Mammary epithelial cell (primary cell): ENCODE measurements at regions of chr14 and their contacts with region 1.

Region 1: DNA sequence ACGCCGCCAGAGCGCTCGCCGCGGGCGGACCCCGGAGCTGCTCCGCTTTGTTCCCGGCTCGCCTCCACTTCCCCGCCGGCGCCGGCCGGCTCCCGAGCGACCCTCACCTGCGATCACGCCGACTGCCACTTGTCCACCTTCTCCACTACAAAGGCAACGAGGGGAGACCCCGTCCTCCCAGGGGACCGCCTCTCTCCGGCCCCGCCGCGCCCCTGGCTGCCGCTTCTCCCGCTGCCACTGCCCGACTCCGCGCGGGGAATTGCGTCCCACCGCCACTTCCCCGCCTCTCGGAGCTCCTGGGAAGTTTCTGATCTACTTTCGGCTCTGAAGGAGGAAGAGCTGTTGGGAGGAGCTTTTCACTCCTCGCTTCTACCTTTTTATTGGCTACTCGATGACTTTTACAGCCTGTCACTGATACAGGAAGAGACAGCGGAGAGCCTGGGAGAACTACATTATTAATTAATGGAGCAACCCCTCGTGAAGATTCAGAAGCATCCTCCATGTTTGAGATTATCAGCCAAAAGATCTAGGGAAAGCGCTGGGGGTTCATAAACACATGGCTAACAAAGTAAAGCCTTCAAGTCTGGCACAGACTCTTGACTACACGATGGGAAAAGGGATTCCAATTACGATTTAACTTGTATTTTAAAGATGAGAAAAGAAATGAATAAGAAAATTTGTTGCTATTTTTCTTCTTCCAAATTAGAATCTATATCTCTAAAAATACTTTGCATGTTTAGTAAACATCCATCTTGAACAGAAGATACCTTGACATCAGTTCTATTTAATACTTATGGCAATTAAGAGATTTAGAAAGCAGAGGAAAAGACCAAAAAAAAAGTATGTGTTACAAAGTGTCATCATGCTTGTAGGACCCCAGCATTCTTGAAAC is at the start of gene BAZ1A:
- DNase-seq: peak; percentile 93
- H3K4me3 ChIP-seq: peak within 1 kb of the TSS; percentile 74 to 98 (median 74)
- H3K27ac ChIP-seq: peak within 1 kb of the TSS; percentile 98
- H3K4me1 ChIP-seq: peaks cover 14% of the 10 kb centered on the region
- H3K27me3 ChIP-seq: no peaks in the 10 kb centered on the region
- CTCF ChIP-seq: no peak
- total RNA-seq, gene BAZ1A: 25.0 to 42.3 TPM

Region 2: GRCh38 chr14:34671716-34672115 is 203.6 kb before region 1 on chr14:
- CTCF ChIA-PET with region 1: no interaction called
- dilution Hi-C with region 1: no loop called
- in situ Hi-C with region 1: no loop called
- intact Hi-C with region 1: loop called (anchors 2 kb)
- DNase-seq: no peak
- H3K4me3 ChIP-seq: no peak overlapping the region
- H3K27ac ChIP-seq: no peak overlapping the region
- H3K4me1 ChIP-seq: peaks cover 4% of the 10 kb centered on the region
- H3K27me3 ChIP-seq: no peaks in the 10 kb centered on the region
- CTCF ChIP-seq: no peak

Region 3: DNA sequence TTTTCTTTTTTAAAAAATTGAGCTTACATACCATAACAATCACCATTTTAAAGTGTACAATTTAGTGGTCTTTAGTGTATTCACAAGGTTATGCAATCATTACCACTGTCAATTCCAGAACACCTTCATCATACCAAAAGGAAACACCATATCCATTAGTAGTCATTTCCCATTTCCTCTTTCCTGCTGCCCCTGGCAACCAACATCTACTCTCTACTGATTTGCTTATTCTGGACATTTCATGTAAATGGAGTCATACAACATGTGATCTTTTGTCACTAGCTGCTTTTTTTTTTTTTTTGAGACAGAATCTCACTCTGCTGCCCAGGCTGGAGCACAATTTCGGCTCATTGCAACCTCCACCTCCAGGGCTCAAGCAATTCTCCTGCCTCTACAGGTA is 94.0 kb before region 1 on chr14:
- CTCF ChIA-PET with region 1: interaction called, 3 read pairs
- dilution Hi-C with region 1: no loop called
- in situ Hi-C with region 1: no loop called
- intact Hi-C with region 1: loop called (anchors 5 kb)
- DNase-seq: peak; percentile 89
- H3K4me3 ChIP-seq: no peak overlapping the region
- H3K27ac ChIP-seq: peak overlapping the region; percentile 63
- H3K4me1 ChIP-seq: peaks cover 15% of the 10 kb centered on the region
- H3K27me3 ChIP-seq: no peaks in the 10 kb centered on the region
- CTCF ChIP-seq: no peak

Region 4: GRCh38 chr14:34843011-34843554 is 32.2 kb before region 1 on chr14:
- CTCF ChIA-PET with region 1: no interaction called
- dilution Hi-C with region 1: no loop called
- in situ Hi-C with region 1: no loop called
- intact Hi-C with region 1: loop called (anchors 1 kb)
- DNase-seq: peak; percentile 97
- H3K4me3 ChIP-seq: no peak overlapping the region
- H3K27ac ChIP-seq: peak overlapping the region; percentile 42
- H3K4me1 ChIP-seq: peaks cover 18% of the 10 kb centered on the region
- H3K27me3 ChIP-seq: no peaks in the 10 kb centered on the region
- CTCF ChIP-seq: no peak

Region 5: GRCh38 chr14:35046048-35046741 is 170.9 kb after region 1 on chr14 and contains the start of gene FAM177A1:
- CTCF ChIA-PET with region 1: no interaction called
- dilution Hi-C with region 1: no loop called
- in situ Hi-C with region 1: no loop called
- intact Hi-C with region 1: loop called (anchors 2 kb)
- DNase-seq: peak; percentile 98
- H3K4me3 ChIP-seq: peak within 1 kb of the TSS; percentile 88 to 98 (median 91)
- H3K27ac ChIP-seq: peak within 1 kb of the TSS; percentile 97
- H3K4me1 ChIP-seq: peaks cover 11% of the 10 kb centered on the region
- H3K27me3 ChIP-seq: no peaks in the 10 kb centered on the region
- CTCF ChIP-seq: no peak
- total RNA-seq, gene FAM177A1: 30.2 to 84.2 TPM